Right ventricle myocardium superior (tissue), 1 donor: ENCODE measurements at regions of chr18 and their contacts with region 1.

Region 1: GRCh38 chr18:23515911-23516546 is 12.7 kb downstream of the RMC1 start:
- DNase-seq: peak; percentile 68
- ATAC-seq: peak; percentile 96

Region 2: DNA sequence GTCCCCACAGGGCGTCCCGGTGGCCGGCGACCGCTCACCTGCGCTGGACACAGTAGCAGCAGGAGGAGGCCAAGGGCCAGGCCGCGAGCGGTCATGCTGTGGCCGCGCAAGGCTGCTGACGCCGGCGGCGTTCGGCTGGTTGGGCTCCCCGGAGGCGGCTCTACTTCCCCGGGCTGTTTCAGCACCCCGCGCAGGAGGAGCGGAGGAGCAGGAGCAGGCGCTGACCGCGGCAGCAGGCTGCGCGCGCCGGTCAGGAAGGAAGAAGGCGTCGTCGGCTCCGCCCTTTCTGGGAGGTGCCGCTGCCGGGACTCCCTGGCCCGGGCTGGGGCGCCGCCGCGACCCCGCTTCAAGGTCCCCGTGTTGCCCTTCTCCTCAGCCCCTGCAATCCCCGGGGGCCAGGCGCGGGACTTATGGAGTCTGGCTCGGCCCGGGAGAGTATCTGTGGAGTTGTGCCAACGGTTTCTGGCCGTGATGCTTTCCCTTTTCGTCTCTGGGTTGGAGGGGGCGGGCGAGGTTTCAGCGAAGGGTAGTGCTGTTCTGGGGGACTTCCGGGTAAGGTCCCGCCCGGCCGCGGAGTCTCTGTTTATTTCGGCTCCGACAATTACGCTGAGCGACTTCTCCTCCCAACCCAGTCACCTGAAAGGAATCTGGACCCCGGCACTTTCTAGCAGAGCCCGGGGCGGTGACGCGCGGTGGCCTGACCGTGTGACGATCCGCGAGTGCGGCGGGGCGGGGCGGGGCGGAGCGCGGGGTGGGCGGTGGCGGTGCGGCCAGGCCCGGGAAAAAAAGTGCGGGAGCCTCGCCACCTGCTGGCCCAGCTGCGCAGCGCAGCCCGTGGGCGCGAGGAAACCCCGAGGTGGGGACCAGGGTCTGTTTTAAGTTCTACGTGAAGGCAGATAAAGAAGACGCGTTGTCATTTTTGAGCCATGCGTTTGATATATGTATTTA is 70.5 kb after region 1 on chr18 and contains the start of gene NPC1:
- intact Hi-C with region 1: loop called (anchors 5 kb)
- DNase-seq: peak; percentile 97
- ATAC-seq: peak; percentile 99
- total RNA-seq, gene NPC1: 9.8 TPM